ENCODE measurements at regions of chr12 and their contacts with region 1.

Region 1: DNA sequence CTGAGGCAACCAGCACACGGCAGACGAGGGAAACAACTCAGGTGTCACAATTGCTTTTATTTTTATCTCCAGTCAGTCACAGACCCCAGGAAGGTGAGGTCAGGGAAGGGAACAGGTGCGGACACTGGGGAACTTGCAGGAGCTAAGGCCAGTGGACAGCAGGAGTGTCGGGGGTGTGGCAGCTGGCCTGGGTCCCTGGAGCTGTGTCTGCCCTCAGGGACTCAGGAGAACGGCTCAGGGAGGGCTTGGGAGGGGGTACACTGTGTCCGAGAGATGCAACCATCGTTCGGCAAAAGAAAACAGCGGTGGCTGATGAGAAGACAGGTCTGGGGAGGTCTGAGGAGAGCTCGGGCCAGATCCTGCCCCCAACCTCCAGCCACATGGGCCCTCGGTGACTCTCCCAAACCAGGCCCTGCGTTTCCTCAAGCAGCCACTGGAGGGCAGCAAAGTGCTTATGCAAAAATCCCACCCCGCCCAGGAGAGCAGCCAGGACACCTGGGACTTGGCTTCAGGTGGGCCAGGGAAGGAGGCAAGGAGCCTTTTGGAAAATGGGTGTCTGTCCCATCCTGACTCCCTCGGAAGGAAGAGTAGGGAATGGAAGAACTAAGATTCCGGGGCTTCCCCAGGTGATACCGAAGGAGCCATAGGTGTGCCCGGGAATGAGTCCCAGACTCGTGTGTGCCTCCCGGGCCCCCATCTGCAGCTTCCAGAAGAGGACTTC is 24.1 kb upstream of the BCDIN3D start:
- DNase-seq: peak; percentile 80
- ATAC-seq: peak; percentile 78
- H3K4me3 Mint-ChIP-seq: no peak overlapping the region
- H3K27ac Mint-ChIP-seq: no peak overlapping the region
- H3K4me1 Mint-ChIP-seq: no peaks in the 10 kb centered on the region
- H3K27me3 Mint-ChIP-seq: peaks cover 7% of the 10 kb centered on the region

Region 2: GRCh38 chr12:49855005-49855404 is 12.0 kb before region 1 on chr12:
- CTCF ChIA-PET with region 1: interaction called, 23 read pairs
- POLR2A ChIA-PET with region 1: no interaction called
- DNase-seq: no peak
- ATAC-seq: no peak
- H3K4me3 Mint-ChIP-seq: no peak overlapping the region
- H3K27ac Mint-ChIP-seq: no peak overlapping the region
- H3K4me1 Mint-ChIP-seq: no peaks in the 10 kb centered on the region
- H3K27me3 Mint-ChIP-seq: peaks cover 42% of the 10 kb centered on the region